Sciatic nerve (tissue), 2 donors: ENCODE measurements at regions of chr16 and their contacts with region 1.

Region 1: GRCh38 chr16:85667841-85668413 is 20.8 kb downstream of the GINS2 start:
- DNase-seq: no peak
- ATAC-seq: no peak

Region 2: GRCh38 chr16:85420501-85421337 is 247.2 kb before region 1 on chr16:
- intact Hi-C with region 1: loop called (anchors 5 kb)
- DNase-seq: peak; percentile 69
- ATAC-seq: no peak

Region 3: DNA sequence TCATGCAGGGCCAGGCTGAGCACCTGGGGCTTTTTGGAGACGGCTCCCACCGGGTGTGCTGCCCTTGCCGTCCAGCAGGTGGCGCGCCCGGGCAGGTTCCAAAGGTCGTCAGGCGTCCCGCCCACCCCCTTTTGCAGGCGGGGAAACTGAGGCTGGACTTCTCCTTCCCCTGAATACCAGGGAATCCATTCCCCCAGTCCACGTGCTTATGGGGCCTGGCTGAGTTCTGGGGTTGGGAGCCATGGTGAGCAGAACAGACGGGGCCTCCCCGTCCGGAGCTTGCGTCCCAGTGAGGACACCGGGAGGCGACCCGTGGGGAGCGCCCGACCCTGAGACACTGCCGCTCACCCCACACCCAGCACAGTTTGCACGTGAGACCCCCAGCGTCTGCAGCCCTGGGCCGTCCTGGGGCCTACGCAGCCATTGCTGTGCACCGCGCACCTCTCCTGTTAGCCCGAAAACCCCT is 1882.6 kb after region 1 on chr16:
- intact Hi-C with region 1: no loop called
- DNase-seq: peak; percentile 68
- ATAC-seq: peak; percentile 65